Heart right ventricle (tissue), 16 donors: ENCODE measurements at regions of chr19 and their contacts with region 1.

Region 1: GRCh38 chr19:33273881-33274682 is 28.3 kb downstream of the CEBPA start:
- DNase-seq: peak in 1 of 2 donors; percentile 40
- ATAC-seq: peak; percentile 26 to 68 (median 45)
- H3K4me3 ChIP-seq: no peak overlapping the region
- H3K27ac ChIP-seq: peak overlapping the region in 1 of 10 donors; percentile 77
- H3K4me1 ChIP-seq: peaks cover 0 to 32% (median 12%) of the 10 kb centered on the region in 9 donors
- H3K27me3 ChIP-seq: peaks cover 0 to 18% (median 5%) of the 10 kb centered on the region in 7 donors
- CTCF ChIP-seq: no peak

Region 2: DNA sequence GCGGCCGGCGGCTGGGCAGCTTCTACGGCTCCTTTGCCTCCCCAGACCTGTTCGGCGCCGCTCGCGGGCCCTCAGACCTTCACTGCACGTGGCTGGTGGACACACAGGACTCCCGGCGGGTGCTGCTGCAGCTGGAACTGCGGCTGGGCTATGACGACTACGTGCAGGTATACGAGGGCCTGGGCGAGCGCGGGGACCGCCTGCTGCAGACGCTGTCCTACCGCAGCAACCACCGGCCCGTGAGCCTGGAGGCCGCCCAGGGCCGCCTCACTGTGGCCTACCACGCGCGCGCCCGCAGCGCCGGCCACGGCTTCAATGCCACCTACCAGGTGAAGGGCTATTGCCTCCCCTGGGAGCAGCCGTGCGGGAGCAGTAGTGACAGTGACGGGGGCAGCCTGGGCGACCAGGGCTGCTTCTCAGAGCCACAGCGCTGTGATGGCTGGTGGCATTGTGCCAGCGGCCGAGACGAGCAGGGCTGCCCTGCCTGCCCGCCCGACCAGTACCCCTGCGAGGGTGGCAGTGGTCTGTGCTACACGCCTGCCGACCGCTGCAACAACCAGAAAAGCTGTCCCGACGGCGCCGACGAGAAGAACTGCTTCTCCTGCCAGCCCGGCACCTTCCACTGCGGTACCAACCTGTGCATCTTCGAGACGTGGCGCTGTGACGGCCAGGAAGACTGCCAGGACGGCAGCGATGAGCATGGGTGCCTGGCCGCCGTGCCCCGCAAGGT is 68.4 kb before region 1 on chr19:
- intact Hi-C with region 1: loop called in 1 of 10 experiments (anchors 2 kb)
- DNase-seq: no peak
- ATAC-seq: no peak
- H3K4me3 ChIP-seq: no peak overlapping the region
- H3K27ac ChIP-seq: no peak overlapping the region
- H3K4me1 ChIP-seq: peaks cover 0 to 7% (median 0%) of the 10 kb centered on the region in 9 donors
- H3K27me3 ChIP-seq: no peaks in the 10 kb centered on the region
- CTCF ChIP-seq: no peak

Region 3: GRCh38 chr19:33325920-33326319 is 51.8 kb after region 1 on chr19:
- intact Hi-C with region 1: no loop called
- DNase-seq: no peak
- ATAC-seq: peak in 2 of 8 donors; percentile 51 to 75
- H3K4me3 ChIP-seq: no peak overlapping the region
- H3K27ac ChIP-seq: no peak overlapping the region
- H3K4me1 ChIP-seq: peaks cover 0 to 17% (median 0%) of the 10 kb centered on the region in 9 donors
- H3K27me3 ChIP-seq: peaks cover 0 to 13% (median 7%) of the 10 kb centered on the region in 7 donors
- CTCF ChIP-seq: no peak